Activated CD4-positive, alpha-beta memory T cell treated with anti-CD3 and anti-CD28 coated beads, Interleukin-2, amount 10 ng/mL, durations not matched to agents 7 days and 5 days (primary cell): ENCODE measurements at regions of chr5 and their contacts with region 1.

Region 1: DNA sequence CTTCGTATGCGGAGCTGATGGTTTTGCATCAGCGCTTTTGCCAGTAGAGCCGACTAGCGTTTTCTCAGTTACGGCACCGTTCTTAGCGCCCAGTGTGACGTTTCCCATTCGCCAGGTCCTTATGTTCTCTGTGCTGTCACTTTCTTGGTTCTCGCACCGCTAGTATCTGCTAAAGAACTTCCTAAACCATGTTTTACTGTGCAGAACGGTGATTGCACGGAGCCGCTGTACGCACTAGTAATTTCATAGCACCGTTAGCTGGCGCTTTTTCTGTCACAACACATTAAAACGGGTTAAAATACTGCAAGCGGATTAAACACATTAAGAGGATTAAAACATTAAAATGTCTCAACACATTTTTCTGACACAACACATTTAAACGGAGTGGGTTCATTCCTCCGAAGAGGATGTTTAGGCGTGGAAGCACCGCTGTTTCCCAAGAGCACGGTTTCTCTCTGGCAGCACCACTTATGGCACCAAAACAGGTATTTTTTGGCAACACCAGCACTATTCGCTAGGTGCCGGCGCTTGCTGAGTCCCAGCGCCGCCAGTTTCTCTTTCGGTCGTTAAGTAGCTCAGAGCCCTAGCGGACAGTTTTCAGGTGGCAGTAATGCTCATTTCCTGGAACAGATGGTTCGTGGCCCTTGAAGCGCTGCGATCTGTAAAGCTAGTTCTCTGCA is 20.4 kb downstream of the ANXA2R start:
- DNase-seq: peak; percentile 90
- H3K4me3 Mint-ChIP-seq: peak overlapping the region; percentile 93
- H3K27ac Mint-ChIP-seq: peak overlapping the region; percentile 99
- H3K4me1 Mint-ChIP-seq: peaks cover 42% of the 10 kb centered on the region
- H3K27me3 Mint-ChIP-seq: no peaks in the 10 kb centered on the region

Region 2: GRCh38 chr5:42950440-42951292 is 69.1 kb before region 1 on chr5:
- CTCF ChIA-PET with region 1: interaction called, 36 read pairs
- POLR2A ChIA-PET with region 1: interaction called, 155 read pairs
- DNase-seq: peak; percentile 77
- H3K4me3 Mint-ChIP-seq: peak overlapping the region; percentile 85
- H3K27ac Mint-ChIP-seq: peak overlapping the region; percentile 100
- H3K4me1 Mint-ChIP-seq: peaks cover 37% of the 10 kb centered on the region
- H3K27me3 Mint-ChIP-seq: no peaks in the 10 kb centered on the region

Region 3: DNA sequence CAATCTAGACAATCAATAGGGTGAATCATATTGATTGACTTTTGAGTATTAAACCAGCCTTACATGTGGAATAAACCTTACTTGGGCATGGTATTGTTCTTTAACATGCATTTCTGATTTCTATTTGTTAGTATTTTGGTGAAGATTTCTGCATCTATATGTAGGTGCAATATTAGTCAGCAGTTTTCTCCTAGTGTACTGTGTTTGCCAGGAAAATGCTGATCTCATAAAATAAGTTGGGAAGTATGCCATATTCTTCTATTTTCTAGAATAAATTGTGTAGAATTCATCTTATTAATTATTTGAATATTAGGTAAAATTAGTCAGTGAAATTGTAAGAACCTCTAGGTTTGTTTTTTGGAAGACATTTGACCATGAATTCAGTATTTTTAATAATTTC is 18.0 kb before region 1 on chr5:
- CTCF ChIA-PET with region 1: interaction called, 105 read pairs
- POLR2A ChIA-PET with region 1: interaction called, 513 read pairs
- DNase-seq: no peak
- H3K4me3 Mint-ChIP-seq: no peak overlapping the region
- H3K27ac Mint-ChIP-seq: no peak overlapping the region
- H3K4me1 Mint-ChIP-seq: peaks cover 5% of the 10 kb centered on the region
- H3K27me3 Mint-ChIP-seq: peaks cover 10% of the 10 kb centered on the region

Region 4: GRCh38 chr5:43008369-43009153 is 11.2 kb before region 1 on chr5:
- CTCF ChIA-PET with region 1: interaction called, 79 read pairs
- POLR2A ChIA-PET with region 1: interaction called, 357 read pairs
- DNase-seq: peak; percentile 93
- H3K4me3 Mint-ChIP-seq: peak overlapping the region; percentile 89
- H3K27ac Mint-ChIP-seq: peak overlapping the region; percentile 97
- H3K4me1 Mint-ChIP-seq: peaks cover 39% of the 10 kb centered on the region
- H3K27me3 Mint-ChIP-seq: peaks cover 5% of the 10 kb centered on the region

Region 5: DNA sequence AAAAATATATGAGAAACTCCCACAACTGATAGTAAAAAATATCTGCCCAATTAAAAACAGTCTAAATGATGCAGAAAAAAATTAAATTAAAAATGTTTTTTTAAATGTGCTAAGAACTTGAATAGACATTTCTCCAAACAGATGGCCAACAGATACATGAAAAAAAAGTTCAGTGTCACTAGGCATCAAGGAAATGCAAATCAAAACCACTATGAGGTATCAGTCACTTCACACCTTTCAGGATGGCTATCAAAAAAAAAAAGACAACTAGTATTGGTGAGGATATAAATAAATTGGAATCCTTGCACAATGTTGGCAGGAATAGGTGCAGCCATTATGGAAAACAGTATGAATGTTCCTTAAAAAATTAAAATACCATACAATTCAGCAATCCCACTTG is 117.6 kb after region 1 on chr5:
- CTCF ChIA-PET with region 1: no interaction called
- POLR2A ChIA-PET with region 1: no interaction called
- DNase-seq: no peak
- H3K4me3 Mint-ChIP-seq: no peak overlapping the region
- H3K27ac Mint-ChIP-seq: no peak overlapping the region
- H3K4me1 Mint-ChIP-seq: peaks cover 32% of the 10 kb centered on the region
- H3K27me3 Mint-ChIP-seq: no peaks in the 10 kb centered on the region